Mammary epithelial cell (primary cell): ENCODE measurements at regions of chr12 and their contacts with region 1.

Region 1: DNA sequence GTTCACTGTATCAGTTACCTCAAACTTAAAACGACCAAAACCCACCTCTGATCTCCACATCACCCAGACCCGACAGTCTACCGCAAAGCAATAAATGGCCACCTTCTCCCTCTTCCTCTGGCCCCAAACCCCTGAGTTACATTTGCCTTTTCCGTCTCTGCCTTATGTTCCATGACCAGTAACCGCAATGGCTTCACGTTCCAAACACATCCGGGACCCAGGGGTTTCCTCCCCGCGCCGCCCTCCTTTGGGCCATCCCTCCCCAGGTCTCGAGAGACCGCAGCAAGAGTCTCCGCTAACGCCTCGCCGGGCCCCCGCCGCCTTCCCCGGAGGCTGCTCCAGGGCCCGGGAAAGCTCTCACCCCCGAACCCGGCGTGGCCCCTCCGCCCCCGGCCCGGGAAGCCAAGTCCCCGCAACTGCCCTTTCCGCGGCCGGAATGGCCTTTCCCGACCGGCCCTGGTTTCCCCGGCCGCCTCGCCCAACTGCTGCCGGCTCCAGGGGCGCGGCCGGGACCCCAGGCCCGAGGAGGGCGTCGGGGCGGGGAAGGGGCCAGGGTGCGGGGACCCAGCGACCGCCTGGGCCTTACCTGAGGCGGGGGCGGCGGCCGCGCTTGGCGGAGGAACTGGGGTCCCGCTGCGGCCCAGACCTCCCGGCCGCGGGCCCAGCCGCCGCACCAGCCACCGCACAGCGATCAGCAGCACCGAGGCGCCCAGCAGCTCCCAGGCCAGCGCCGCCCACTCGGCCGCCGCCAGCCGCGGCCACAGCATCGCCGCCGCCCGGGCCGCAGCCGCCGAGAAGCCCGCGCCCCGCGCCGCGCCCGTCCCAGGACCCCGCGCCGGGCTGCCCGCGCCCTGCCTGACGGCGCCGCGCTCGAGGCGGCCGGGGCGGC is at the start of gene ANKLE2:
- DNase-seq: peak; percentile 61
- H3K4me3 ChIP-seq: peak within 1 kb of the TSS; percentile 83 to 96 (median 94)
- H3K27ac ChIP-seq: peak within 1 kb of the TSS; percentile 100
- H3K4me1 ChIP-seq: peaks cover 12% of the 10 kb centered on the region
- H3K27me3 ChIP-seq: no peaks in the 10 kb centered on the region
- CTCF ChIP-seq: no peak
- total RNA-seq, gene ANKLE2: 90.9 to 163 TPM

Region 2: GRCh38 chr12:132566516-132567131 is 194.7 kb before region 1 on chr12:
- CTCF ChIA-PET with region 1: no interaction called
- dilution Hi-C with region 1: no loop called
- in situ Hi-C with region 1: no loop called
- intact Hi-C with region 1: no loop called
- DNase-seq: no peak
- H3K4me3 ChIP-seq: no peak overlapping the region
- H3K27ac ChIP-seq: no peak overlapping the region
- H3K4me1 ChIP-seq: peaks cover under 1% of the 10 kb centered on the region
- H3K27me3 ChIP-seq: no peaks in the 10 kb centered on the region
- CTCF ChIP-seq: no peak

Region 3: GRCh38 chr12:132710422-132711168 is 50.7 kb before region 1 on chr12 and contains the start of gene PGAM5:
- CTCF ChIA-PET with region 1: no interaction called
- dilution Hi-C with region 1: no loop called
- in situ Hi-C with region 1: no loop called
- intact Hi-C with region 1: loop called (anchors 1 kb)
- DNase-seq: peak; percentile 91
- H3K4me3 ChIP-seq: peak within 1 kb of the TSS; percentile 79 to 94 (median 86)
- H3K27ac ChIP-seq: peak within 1 kb of the TSS; percentile 54
- H3K4me1 ChIP-seq: peaks cover 9% of the 10 kb centered on the region
- H3K27me3 ChIP-seq: no peaks in the 10 kb centered on the region
- CTCF ChIP-seq: no peak
- total RNA-seq, gene PGAM5: 51.2 to 56.4 TPM

Region 4: GRCh38 chr12:132734206-132734605 is 27.1 kb before region 1 on chr12:
- CTCF ChIA-PET with region 1: no interaction called
- dilution Hi-C with region 1: no loop called
- in situ Hi-C with region 1: no loop called
- intact Hi-C with region 1: no loop called
- DNase-seq: no peak
- H3K4me3 ChIP-seq: no peak overlapping the region
- H3K27ac ChIP-seq: no peak overlapping the region
- H3K4me1 ChIP-seq: no peaks in the 10 kb centered on the region
- H3K27me3 ChIP-seq: no peaks in the 10 kb centered on the region
- CTCF ChIP-seq: no peak

Region 5: GRCh38 chr12:132776816-132777568 is 15.7 kb after region 1 on chr12:
- CTCF ChIA-PET with region 1: no interaction called
- dilution Hi-C with region 1: no loop called
- in situ Hi-C with region 1: no loop called
- intact Hi-C with region 1: no loop called
- DNase-seq: no peak
- H3K4me3 ChIP-seq: no peak overlapping the region
- H3K27ac ChIP-seq: no peak overlapping the region
- H3K4me1 ChIP-seq: no peaks in the 10 kb centered on the region
- H3K27me3 ChIP-seq: no peaks in the 10 kb centered on the region
- CTCF ChIP-seq: no peak